Kidney (tissue), 22 donors: ENCODE measurements at regions of chr4 and their contacts with region 1.

Region 1: DNA sequence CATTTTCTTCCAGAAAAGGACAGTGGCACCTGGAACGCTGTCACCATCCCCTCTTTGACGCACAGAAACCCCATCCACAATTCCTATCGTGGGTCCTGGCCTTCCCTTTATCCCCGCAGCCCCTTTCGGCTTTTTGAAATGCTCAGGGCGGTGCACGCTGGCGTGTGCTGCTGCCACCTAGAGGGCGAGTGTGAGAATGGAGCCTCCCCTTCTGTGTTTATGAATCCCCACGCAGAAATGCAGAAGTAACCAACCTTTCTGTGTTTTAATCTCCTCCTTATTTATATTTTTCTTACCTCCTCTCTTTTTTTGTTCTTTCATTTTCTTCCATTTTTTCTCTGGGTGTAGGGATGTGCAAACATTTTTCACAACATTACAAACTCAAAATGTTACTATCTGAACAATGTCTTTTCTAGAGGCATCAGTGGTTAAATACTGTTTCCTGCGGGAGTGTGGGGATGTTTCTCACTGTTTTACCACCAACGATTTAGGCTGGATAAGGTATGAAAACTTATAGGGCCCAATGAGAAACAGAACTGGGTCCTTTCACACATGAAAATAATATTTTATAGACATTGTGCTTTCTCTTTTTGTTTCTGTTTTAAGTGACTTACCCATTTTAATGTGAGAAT is 50.0 kb downstream of the TMA16 start:
- DNase-seq: peak; percentile 55 to 80 (median 59)
- H3K4me3 ChIP-seq: peak overlapping the region in 2 of 3 donors; percentile 49 to 59
- H3K27ac ChIP-seq: no peak overlapping the region
- H3K4me1 ChIP-seq: no peaks in the 10 kb centered on the region
- H3K27me3 ChIP-seq: no peaks in the 10 kb centered on the region
- CTCF ChIP-seq: peak; percentile 70

Region 2: DNA sequence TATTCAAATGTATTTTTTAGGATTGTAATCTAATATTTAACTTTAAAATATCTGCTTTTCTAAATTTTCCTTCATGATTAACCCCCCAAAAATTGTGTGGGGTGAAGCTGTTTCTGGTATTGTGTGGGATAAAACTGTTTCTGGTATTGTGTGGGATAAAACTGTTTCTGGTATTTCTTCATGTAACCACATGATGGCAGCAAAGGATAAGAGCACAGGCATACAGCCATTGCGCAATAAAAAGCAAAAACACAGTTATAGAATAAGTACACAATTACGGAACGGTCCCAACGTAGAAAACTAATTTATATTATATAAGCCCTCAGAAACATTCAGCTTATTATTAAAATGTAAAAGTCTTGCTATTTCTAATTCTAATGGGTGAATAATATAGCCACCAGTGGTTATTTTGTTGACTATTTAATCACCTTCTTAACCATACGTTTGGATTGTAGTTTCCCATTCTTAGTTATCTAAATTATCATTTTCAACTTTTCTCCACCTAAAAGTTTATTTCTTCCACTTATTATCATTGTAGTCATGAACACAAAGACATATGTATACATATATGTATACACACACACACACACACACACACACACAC is 1046.9 kb before region 1 on chr4:
- intact Hi-C with region 1: loop called (anchors 10 kb)
- DNase-seq: peak in 2 of 5 donors; percentile 44 to 53
- H3K4me3 ChIP-seq: no peak overlapping the region
- H3K27ac ChIP-seq: no peak overlapping the region
- H3K4me1 ChIP-seq: no peaks in the 10 kb centered on the region
- H3K27me3 ChIP-seq: no peaks in the 10 kb centered on the region
- CTCF ChIP-seq: peak; percentile 83